Sciatic nerve (tissue), 2 donors: ENCODE measurements at regions of chr14 and their contacts with region 1.

Region 1: DNA sequence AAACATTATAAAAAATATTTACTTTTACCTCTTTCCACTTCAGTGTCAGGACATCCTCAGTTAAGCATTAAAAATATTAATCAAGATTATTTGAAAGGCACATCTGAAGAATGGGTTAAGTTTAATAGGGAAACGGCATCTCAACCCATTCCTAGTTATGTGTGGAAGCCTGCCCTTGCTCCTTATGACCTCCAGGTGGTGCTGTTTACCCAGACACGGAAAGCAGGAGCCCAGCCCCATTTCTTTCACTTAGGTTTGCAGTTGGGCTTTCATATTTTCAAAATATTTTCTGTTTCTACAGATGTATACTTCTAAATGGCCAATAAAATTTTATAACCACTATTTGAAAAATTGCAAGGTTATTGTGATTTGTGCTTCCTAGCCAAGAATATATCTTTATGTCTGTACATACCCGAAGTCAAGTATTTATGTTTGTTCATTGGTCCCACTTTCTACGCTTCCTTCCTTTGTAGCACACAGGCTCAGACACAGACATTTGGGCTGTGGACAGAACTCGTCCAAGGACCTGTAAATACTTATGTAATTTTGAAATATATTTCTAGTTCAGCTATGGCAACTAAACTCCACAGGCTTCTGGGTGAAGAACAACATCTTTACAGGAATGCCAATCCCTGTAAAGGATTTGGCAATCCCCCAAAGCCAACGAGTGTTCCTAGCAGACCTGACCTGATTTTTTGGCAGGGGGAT is 247.1 kb downstream of the AKAP6 start:
- DNase-seq: no peak
- ATAC-seq: peak; percentile 96

Region 2: DNA sequence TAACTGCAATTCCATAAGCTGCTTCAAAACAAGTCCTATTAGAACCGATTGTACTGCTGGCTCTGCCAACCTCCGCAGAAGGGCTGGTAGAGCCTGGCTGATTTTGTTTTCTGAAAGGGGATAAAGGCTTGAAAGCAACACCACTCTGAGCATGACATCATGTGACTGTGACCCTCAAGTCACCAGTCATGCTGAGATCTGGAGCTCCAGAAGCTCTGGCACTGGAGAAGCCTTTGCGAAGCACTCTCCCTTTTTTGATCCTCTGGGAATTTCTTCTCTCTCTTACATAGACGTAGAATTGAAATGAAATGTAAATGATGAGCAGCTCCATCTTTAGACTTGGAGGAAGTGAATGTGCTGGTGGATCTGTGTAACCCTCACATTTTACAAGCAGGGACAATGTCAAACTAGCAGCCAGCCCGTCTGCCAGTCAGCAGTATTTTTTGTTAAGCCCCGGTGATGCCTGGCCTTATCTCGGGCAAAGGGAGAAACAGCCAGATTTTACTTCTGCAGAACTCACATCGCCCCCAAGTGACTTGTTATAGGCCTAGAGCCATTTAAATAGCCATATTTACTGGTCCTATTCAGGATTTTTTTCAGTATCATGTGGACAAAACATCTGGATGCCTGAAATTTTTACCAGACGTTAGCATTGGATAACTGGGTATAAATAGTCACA is 250.3 kb after region 1 on chr14:
- intact Hi-C with region 1: loop called (anchors 10 kb)
- DNase-seq: no peak
- ATAC-seq: peak; percentile 70

Region 3: DNA sequence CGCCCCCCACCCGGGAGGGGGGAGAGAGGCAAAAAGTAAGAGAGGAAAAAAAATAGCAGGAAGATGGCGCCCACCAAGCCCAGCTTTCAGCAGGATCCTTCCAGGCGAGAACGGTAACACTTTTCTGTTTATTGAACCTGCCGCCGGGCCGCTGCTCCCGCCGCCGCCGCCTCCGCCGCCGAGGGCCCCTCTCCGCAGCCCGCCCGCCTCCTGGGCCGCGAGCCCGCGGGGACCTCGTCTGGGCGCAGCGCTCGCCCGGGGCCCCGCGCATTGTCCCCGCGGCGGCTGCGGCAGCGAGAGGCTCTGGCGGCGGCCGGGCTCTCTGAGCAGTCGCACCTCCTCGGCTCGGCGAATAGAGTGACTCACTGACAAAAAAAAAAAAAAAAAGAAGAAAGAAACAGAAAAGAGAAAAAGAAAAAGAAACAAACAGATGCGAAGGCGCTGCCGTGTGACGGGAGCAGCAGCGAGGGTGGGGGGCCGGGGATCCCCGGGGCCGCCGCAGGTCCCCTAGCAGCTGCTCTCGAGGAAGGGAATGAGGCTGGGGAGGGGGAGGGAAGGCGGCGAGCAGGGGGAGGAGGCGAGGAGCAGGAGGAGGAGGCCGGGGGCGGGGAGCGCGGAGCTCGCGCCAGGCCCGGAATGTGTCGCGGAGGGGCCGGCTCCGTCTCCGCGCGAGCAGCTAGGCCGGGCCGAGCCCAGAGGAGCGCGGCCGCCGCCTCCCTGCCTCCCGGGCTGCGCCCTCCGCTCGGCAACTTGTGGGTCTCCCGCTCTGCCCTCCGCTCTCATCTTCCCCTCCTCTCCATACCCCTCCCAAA is 363.2 kb after region 1 on chr14:
- intact Hi-C with region 1: loop called (anchors 5 kb)
- DNase-seq: peak; percentile 88
- ATAC-seq: peak; percentile 94

Region 4: GRCh38 chr14:33792720-33793368 is 1216.6 kb after region 1 on chr14:
- intact Hi-C with region 1: loop called (anchors 5 kb)
- DNase-seq: peak; percentile 94
- ATAC-seq: peak; percentile 94